Transverse colon (tissue), 4 donors: ENCODE measurements at regions of chr19 and their contacts with region 1.

Region 1: GRCh38 chr19:8641908-8642547 is 11.6 kb downstream of the NFILZ start:
- DNase-seq: no peak
- H3K4me3 ChIP-seq: no peak overlapping the region
- H3K27ac ChIP-seq: no peak overlapping the region
- H3K4me1 ChIP-seq: peaks cover 0 to 20% (median 2%) of the 10 kb centered on the region in 4 donors
- H3K27me3 ChIP-seq: no peaks in the 10 kb centered on the region
- CTCF ChIP-seq: peak; percentile 44 to 55 (median 50)
- EP300 ChIP-seq: no peak
- POLR2A ChIP-seq: no peak

Region 2: GRCh38 chr19:8578642-8579265 is 63.3 kb before region 1 on chr19:
- in situ Hi-C with region 1: no loop called
- intact Hi-C with region 1: loop called (anchors 10 kb)
- DNase-seq: peak; percentile 85
- H3K4me3 ChIP-seq: no peak overlapping the region
- H3K27ac ChIP-seq: no peak overlapping the region
- H3K4me1 ChIP-seq: peaks cover 0 to 18% (median 7%) of the 10 kb centered on the region in 4 donors
- H3K27me3 ChIP-seq: peaks cover 16% of the 10 kb centered on the region
- CTCF ChIP-seq: peak; percentile 81 to 96 (median 93)
- EP300 ChIP-seq: no peak
- POLR2A ChIP-seq: no peak